ENCODE measurements at regions of chr13 and their contacts with region 1.

Region 1: DNA sequence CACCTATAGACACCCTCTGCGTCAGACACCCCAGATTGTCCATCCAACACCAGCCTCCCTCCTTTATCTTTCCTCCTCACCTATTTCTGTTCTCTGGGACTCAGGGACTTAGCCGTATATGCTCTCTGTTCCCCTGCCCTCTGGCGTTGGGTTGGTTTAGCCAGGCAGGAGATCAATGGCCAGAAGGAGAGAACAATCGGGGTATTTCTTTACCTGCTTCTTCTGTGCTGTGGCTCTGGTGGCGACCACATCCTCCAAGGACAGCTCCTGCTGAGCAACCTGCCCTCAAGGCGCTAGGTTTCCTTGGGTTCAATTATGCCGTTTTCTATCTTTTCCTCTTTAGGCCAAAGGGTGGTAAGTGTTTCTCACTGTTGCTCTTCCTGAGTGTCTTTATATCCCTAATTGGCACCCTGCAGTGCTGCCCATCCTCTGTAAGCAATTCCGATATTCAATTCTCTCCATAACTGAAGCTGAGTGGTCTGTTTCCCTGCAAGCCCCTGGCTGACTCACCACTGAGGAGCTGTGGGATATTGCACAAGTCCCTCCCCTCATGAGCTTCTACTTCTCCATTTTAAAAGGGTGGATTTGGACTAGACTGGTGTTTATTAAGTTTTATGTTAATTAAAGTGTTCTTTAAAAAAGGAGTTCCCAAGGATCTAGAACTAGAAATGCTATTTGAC is 63.7 kb upstream of the TMTC4 start:
- DNase-seq: no peak
- H3K4me3 Mint-ChIP-seq: no peak overlapping the region
- H3K27ac Mint-ChIP-seq: no peak overlapping the region
- H3K4me1 Mint-ChIP-seq: no peaks in the 10 kb centered on the region
- H3K27me3 Mint-ChIP-seq: peaks cover 14% of the 10 kb centered on the region

Region 2: DNA sequence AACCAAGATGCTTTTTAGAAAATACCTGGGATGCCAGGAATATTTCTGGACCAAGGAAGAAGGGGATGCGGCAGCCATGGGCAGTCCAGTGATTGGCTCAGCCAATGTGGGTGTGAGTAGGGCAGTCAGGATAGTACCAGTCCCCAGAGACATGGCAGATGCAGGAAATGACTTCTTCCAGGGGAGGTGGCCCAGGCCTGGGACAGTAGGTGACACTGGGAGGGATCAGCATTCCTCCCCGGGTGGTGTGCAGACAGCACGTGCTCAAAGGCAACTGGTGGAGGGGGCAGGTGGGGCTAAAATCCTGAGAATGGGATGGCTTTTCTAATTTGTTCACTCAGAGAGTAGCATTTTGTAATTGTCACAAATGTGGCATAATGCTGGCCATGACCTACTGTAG is 24.7 kb after region 1 on chr13:
- CTCF ChIA-PET with region 1: no interaction called
- intact Hi-C with region 1: loop called (anchors 1 kb)
- DNase-seq: no peak
- H3K4me3 Mint-ChIP-seq: no peak overlapping the region
- H3K27ac Mint-ChIP-seq: no peak overlapping the region
- H3K4me1 Mint-ChIP-seq: no peaks in the 10 kb centered on the region
- H3K27me3 Mint-ChIP-seq: no peaks in the 10 kb centered on the region